GM12878 (cell line): ENCODE measurements at regions of chr16 and their contacts with region 1.

Region 1: DNA sequence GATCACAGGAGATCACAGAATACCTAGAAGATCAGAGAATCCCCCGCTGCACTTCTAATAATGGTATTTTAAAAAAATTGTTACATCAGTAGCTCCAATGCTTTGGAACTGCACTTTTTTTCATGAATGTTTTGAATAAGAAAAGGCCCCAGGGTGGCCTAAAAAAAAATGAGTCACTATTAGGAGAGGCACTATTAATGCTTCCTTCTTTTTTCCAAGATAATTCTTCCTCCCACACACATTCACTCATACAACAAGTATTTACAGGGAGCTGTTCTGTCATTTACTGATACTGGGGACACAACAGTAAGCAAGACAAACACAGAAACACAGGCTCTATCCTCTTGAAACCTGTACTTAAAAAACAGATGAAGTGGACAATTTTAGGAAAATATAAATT is 675 bp upstream of the PDZD9 start:
- DNase-seq: no peak
- ATAC-seq: no peak
- H3K4me3 ChIP-seq: no peak overlapping the region
- H3K27ac ChIP-seq: no peak overlapping the region
- H3K4me1 ChIP-seq: no peaks in the 10 kb centered on the region
- H3K27me3 ChIP-seq: no peaks in the 10 kb centered on the region
- CTCF ChIP-seq: no peak
- EP300 ChIP-seq: no peak
- POLR2A ChIP-seq: no peak
- RAD21 ChIP-seq: no peak

Region 2: DNA sequence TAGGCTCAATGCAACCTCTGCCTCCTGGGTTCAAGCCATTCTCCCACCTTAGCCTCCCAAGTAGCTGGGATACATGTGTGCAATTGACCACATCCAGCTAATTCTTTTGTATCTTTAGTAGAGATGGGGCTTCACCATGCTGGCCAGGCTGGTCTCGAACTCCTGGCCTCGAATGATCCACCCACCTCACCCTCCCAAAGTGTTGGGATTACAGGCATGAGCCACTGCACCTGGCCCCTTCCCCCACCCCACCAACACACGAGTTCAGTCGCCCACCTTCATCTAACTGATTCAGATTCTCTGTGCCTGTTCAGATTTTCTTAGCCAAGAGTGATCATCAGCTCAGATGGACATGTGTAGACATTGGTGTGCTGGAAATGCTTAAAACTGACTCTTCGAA is 427.2 kb before region 1 on chr16:
- CTCF ChIA-PET with region 1: no interaction called
- POLR2A ChIA-PET with region 1: no interaction called
- RAD21 ChIA-PET with region 1: no interaction called
- SMC1A ChIA-PET with region 1: no interaction called
- in situ Hi-C with region 1: no loop called
- intact Hi-C with region 1: no loop called
- DNase-seq: no peak
- ATAC-seq: no peak
- H3K4me3 ChIP-seq: no peak overlapping the region
- H3K27ac ChIP-seq: no peak overlapping the region
- H3K4me1 ChIP-seq: no peaks in the 10 kb centered on the region
- H3K27me3 ChIP-seq: 0 out of 4 replicates have a peak, but pooled peaks cover 0 to 2% of the 10 kb centered on the region in 2 experiments
- CTCF ChIP-seq: no peak
- EP300 ChIP-seq: no peak
- POLR2A ChIP-seq: no peak
- RAD21 ChIP-seq: no peak

Region 3: DNA sequence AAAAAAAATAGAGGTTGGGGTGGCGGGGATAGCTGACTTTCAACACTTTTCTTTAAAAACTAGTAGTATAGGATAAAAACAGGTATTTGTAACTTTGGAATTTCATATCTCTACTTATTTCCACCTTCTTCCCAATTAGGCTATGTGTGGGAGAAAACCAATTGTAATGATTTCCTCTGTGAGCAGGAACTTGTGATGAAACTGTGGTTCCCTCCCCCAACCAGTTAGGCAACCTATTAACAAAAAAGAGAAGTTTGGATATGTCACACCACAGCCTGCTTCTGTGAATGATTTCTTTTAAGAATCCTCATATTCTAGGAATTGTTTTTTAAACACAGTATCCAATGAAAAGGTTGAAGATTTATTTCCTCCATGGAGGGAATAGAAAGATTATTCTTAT is 351.1 kb before region 1 on chr16:
- CTCF ChIA-PET with region 1: no interaction called
- POLR2A ChIA-PET with region 1: no interaction called
- RAD21 ChIA-PET with region 1: no interaction called
- SMC1A ChIA-PET with region 1: no interaction called
- in situ Hi-C with region 1: no loop called
- intact Hi-C with region 1: no loop called
- DNase-seq: no peak
- ATAC-seq: no peak
- H3K4me3 ChIP-seq: no peak overlapping the region
- H3K27ac ChIP-seq: no peak overlapping the region
- H3K4me1 ChIP-seq: peaks cover 26% of the 10 kb centered on the region
- H3K27me3 ChIP-seq: no peaks in the 10 kb centered on the region
- CTCF ChIP-seq: no peak
- EP300 ChIP-seq: no peak
- POLR2A ChIP-seq: no peak
- RAD21 ChIP-seq: no peak

Region 4: GRCh38 chr16:21989133-21989532 is 12.5 kb before region 1 on chr16:
- CTCF ChIA-PET with region 1: interaction called, 28 read pairs
- POLR2A ChIA-PET with region 1: no interaction called
- RAD21 ChIA-PET with region 1: interaction called, 9 read pairs
- SMC1A ChIA-PET with region 1: interaction called, 8 read pairs
- in situ Hi-C with region 1: no loop called
- intact Hi-C with region 1: no loop called
- DNase-seq: no peak
- ATAC-seq: no peak
- H3K4me3 ChIP-seq: no peak overlapping the region
- H3K27ac ChIP-seq: no peak overlapping the region
- H3K4me1 ChIP-seq: no peaks in the 10 kb centered on the region
- H3K27me3 ChIP-seq: no peaks in the 10 kb centered on the region
- CTCF ChIP-seq: no peak
- EP300 ChIP-seq: no peak
- POLR2A ChIP-seq: no peak
- RAD21 ChIP-seq: no peak

Region 5: DNA sequence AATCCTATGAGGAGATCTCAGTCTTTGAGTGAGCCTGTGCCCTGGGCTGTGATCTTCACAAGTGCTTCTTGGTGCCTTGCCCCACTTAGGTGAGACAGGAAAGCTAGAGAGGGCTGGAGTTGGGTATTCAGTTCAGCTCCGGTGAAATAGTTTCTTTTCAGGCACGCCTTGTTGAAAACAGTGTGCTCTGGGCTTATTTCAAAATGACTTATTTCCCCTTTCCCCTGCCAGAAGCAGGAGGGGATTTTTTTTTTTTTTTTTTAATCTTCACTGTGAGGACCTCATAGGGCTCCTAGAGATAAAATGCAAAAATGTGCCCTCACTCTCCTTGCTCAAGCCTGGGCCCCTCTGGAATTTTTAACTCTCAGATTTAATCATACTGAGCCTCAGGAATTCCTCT is 33.6 kb after region 1 on chr16:
- CTCF ChIA-PET with region 1: interaction called, 4 read pairs
- POLR2A ChIA-PET with region 1: no interaction called
- RAD21 ChIA-PET with region 1: no interaction called
- SMC1A ChIA-PET with region 1: interaction called, 5 read pairs
- in situ Hi-C with region 1: no loop called
- intact Hi-C with region 1: loop called (anchors 5 kb)
- DNase-seq: peak; percentile 43
- ATAC-seq: peak; percentile 93
- H3K4me3 ChIP-seq: no peak overlapping the region
- H3K27ac ChIP-seq: peak overlapping the region; percentile 52
- H3K4me1 ChIP-seq: peaks cover 5% of the 10 kb centered on the region
- H3K27me3 ChIP-seq: no peaks in the 10 kb centered on the region
- CTCF ChIP-seq: no peak
- EP300 ChIP-seq: no peak
- POLR2A ChIP-seq: no peak
- RAD21 ChIP-seq: no peak

Region 6: DNA sequence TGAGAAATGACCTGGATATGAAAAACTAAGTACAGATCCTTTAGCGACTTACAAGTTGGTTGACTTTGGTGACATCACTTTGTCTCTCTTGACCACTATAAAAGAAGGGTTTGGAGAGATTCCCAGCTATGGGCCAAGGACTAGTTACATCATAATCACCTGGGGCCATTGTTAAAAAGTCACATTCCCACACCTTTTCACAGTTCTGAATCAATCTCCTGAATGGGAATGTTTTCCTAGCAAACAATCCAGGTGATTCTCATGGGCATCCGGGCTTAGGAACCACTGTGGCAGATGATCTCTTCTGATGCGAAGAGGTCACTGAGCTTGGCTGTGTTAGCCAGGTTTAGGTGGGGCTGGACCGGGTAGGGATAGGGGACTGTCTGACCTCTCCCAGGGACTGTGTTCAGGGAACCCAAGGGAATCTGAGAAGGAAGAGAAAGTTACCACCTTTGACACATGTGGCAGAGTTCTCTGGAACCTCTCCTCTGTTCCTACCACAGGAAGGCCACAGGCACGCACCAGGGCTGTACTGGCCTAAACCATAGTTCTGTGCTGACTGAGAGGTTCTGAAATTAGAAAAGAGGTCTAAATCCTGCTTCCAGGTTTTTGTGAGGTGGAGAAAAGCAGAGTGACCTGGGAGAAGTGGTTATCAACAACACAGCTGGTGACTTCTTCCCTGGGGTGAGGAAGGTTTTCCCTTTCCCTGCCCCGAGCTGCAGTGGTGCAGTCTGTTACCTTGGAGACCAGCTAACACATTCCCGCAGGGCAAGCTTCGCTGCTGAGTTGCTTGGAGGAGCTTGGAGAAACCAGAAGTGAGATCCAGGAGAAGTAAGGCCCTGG is 90.4 kb after region 1 on chr16 and contains the start of gene VWA3A:
- CTCF ChIA-PET with region 1: interaction called, 13 read pairs
- POLR2A ChIA-PET with region 1: no interaction called
- RAD21 ChIA-PET with region 1: interaction called, 3 read pairs
- SMC1A ChIA-PET with region 1: interaction called, 4 read pairs
- in situ Hi-C with region 1: loop called (anchors 5 kb)
- intact Hi-C with region 1: no loop called
- DNase-seq: no peak
- ATAC-seq: no peak
- H3K4me3 ChIP-seq: no peak within 1 kb of the TSS
- H3K27ac ChIP-seq: no peak within 1 kb of the TSS
- H3K4me1 ChIP-seq: no peaks in the 10 kb centered on the region
- H3K27me3 ChIP-seq: no peaks in the 10 kb centered on the region
- CTCF ChIP-seq: no peak
- EP300 ChIP-seq: no peak
- POLR2A ChIP-seq: no peak
- RAD21 ChIP-seq: no peak
- polyA plus RNA-seq, gene VWA3A: not detected

Region 7: GRCh38 chr16:22183901-22184614 is 182.5 kb after region 1 on chr16:
- CTCF ChIA-PET with region 1: interaction called, 101 read pairs
- POLR2A ChIA-PET with region 1: no interaction called
- RAD21 ChIA-PET with region 1: interaction called, 51 read pairs
- SMC1A ChIA-PET with region 1: interaction called, 61 read pairs
- in situ Hi-C with region 1: loop called (anchors 5 kb)
- intact Hi-C with region 1: loop called (anchors 1 kb)
- DNase-seq: no peak
- ATAC-seq: peak; percentile 77
- H3K4me3 ChIP-seq: no peak overlapping the region
- H3K27ac ChIP-seq: no peak overlapping the region
- H3K4me1 ChIP-seq: peaks cover 10% of the 10 kb centered on the region
- H3K27me3 ChIP-seq: no peaks in the 10 kb centered on the region
- CTCF ChIP-seq: peak; percentile 42 to 67 (median 56)
- EP300 ChIP-seq: no peak
- POLR2A ChIP-seq: no peak
- RAD21 ChIP-seq: 0 out of 2 replicates have a peak, but pooled peaks have one; percentile 26

Region 8: GRCh38 chr16:22284637-22285036 is 283.0 kb after region 1 on chr16:
- CTCF ChIA-PET with region 1: no interaction called
- POLR2A ChIA-PET with region 1: no interaction called
- RAD21 ChIA-PET with region 1: no interaction called
- SMC1A ChIA-PET with region 1: no interaction called
- in situ Hi-C with region 1: no loop called
- intact Hi-C with region 1: no loop called
- DNase-seq: no peak
- ATAC-seq: no peak
- H3K4me3 ChIP-seq: no peak overlapping the region
- H3K27ac ChIP-seq: no peak overlapping the region
- H3K4me1 ChIP-seq: no peaks in the 10 kb centered on the region
- H3K27me3 ChIP-seq: no peaks in the 10 kb centered on the region
- CTCF ChIP-seq: no peak
- EP300 ChIP-seq: no peak
- POLR2A ChIP-seq: no peak
- RAD21 ChIP-seq: no peak